ENCODE measurements at regions of chr14 and their contacts with region 1.

Region 1: GRCh38 chr14:22929104-22929847 is at the start of gene PRMT5:
- DNase-seq: peak; percentile 98
- ATAC-seq: peak; percentile 98
- H3K4me3 Mint-ChIP-seq: no peak within 1 kb of the TSS
- H3K27ac Mint-ChIP-seq: no peak within 1 kb of the TSS
- H3K4me1 Mint-ChIP-seq: peaks cover 27% of the 10 kb centered on the region
- H3K27me3 Mint-ChIP-seq: no peaks in the 10 kb centered on the region
- total RNA-seq, gene PRMT5: 55.5 to 64.9 TPM

Region 2: GRCh38 chr14:22872033-22872832 is 57.0 kb before region 1 on chr14:
- CTCF ChIA-PET with region 1: interaction called, 11 read pairs
- POLR2A ChIA-PET with region 1: interaction called, 13 read pairs
- DNase-seq: peak; percentile 78
- ATAC-seq: peak; percentile 52
- H3K4me3 Mint-ChIP-seq: peak overlapping the region; percentile 84
- H3K27ac Mint-ChIP-seq: peak overlapping the region; percentile 97
- H3K4me1 Mint-ChIP-seq: peaks cover 24% of the 10 kb centered on the region
- H3K27me3 Mint-ChIP-seq: no peaks in the 10 kb centered on the region

Region 3: GRCh38 chr14:22939684-22940083 is 10.4 kb after region 1 on chr14:
- CTCF ChIA-PET with region 1: interaction called, 18 read pairs
- POLR2A ChIA-PET with region 1: no interaction called
- DNase-seq: no peak
- ATAC-seq: no peak
- H3K4me3 Mint-ChIP-seq: no peak overlapping the region
- H3K27ac Mint-ChIP-seq: no peak overlapping the region
- H3K4me1 Mint-ChIP-seq: no peaks in the 10 kb centered on the region
- H3K27me3 Mint-ChIP-seq: no peaks in the 10 kb centered on the region

Region 4: GRCh38 chr14:22955702-22956569 is 26.7 kb after region 1 on chr14:
- CTCF ChIA-PET with region 1: interaction called, 49 read pairs
- POLR2A ChIA-PET with region 1: interaction called, 15 read pairs
- DNase-seq: no peak
- ATAC-seq: no peak
- H3K4me3 Mint-ChIP-seq: peak overlapping the region; percentile 95
- H3K27ac Mint-ChIP-seq: peak overlapping the region; percentile 92
- H3K4me1 Mint-ChIP-seq: peaks cover 29% of the 10 kb centered on the region
- H3K27me3 Mint-ChIP-seq: no peaks in the 10 kb centered on the region

Region 5: DNA sequence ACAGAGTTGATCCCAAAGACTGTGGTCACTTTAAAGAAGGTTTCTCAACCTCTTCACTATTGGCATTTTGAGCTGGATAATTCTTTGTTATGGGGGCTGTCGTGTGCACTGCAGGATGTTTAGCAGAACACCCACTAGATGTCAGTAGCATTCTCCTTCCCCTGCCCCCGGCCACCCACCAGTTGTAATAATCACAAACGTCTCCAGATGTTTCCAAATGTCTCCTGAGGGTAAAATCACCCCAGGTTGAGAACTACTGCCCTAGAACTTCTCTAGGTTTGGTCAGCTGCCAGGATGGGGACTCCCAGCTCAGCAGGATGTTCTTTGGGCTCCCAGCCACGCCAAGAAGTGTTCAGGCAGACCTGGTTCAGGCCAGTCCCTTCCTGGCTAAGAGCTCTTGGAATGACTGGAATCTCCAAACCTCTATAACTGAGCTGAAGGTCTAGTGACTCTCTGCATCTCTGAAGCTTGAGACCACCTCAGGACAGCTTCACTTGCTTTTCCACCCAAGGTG is 65.5 kb after region 1 on chr14:
- CTCF ChIA-PET with region 1: interaction called, 21 read pairs
- POLR2A ChIA-PET with region 1: no interaction called
- DNase-seq: peak; percentile 56
- ATAC-seq: peak; percentile 83
- H3K4me3 Mint-ChIP-seq: no peak overlapping the region
- H3K27ac Mint-ChIP-seq: no peak overlapping the region
- H3K4me1 Mint-ChIP-seq: peaks cover 3% of the 10 kb centered on the region
- H3K27me3 Mint-ChIP-seq: no peaks in the 10 kb centered on the region

Region 6: GRCh38 chr14:23047034-23047634 is 117.9 kb after region 1 on chr14:
- CTCF ChIA-PET with region 1: no interaction called
- POLR2A ChIA-PET with region 1: no interaction called
- DNase-seq: no peak
- ATAC-seq: no peak
- H3K4me3 Mint-ChIP-seq: no peak overlapping the region
- H3K27ac Mint-ChIP-seq: no peak overlapping the region
- H3K4me1 Mint-ChIP-seq: no peaks in the 10 kb centered on the region
- H3K27me3 Mint-ChIP-seq: no peaks in the 10 kb centered on the region

Region 7: GRCh38 chr14:23057757-23058653 is 128.7 kb after region 1 on chr14:
- CTCF ChIA-PET with region 1: interaction called, 14 read pairs
- POLR2A ChIA-PET with region 1: no interaction called
- DNase-seq: peak; percentile 91
- ATAC-seq: peak; percentile 76
- H3K4me3 Mint-ChIP-seq: peak overlapping the region; percentile 83
- H3K27ac Mint-ChIP-seq: peak overlapping the region; percentile 34
- H3K4me1 Mint-ChIP-seq: peaks cover 18% of the 10 kb centered on the region
- H3K27me3 Mint-ChIP-seq: peaks cover 9% of the 10 kb centered on the region

Measured in activated CD8-positive, alpha-beta T cell treated with anti-CD3 and anti-CD28 coated beads, Interleukin-2, amount 10 ng/mL, durations not matched to agents 7 days and 5 days (primary cell).